ENCODE measurements at regions of chr3 and their contacts with region 1.

Region 1: GRCh38 chr3:15815696-15816095 is 17.9 kb upstream of the ANKRD28 start:
- DNase-seq: peak; percentile 84
- ATAC-seq: peak; percentile 59
- H3K4me3 ChIP-seq: no peak overlapping the region
- H3K27ac ChIP-seq: no peak overlapping the region
- H3K4me1 ChIP-seq: peaks cover 21% of the 10 kb centered on the region
- H3K27me3 ChIP-seq: no peaks in the 10 kb centered on the region
- CTCF ChIP-seq: peak; percentile 84

Region 2: GRCh38 chr3:15629860-15630597 is 185.7 kb before region 1 on chr3:
- CTCF ChIA-PET with region 1: interaction called, 6 read pairs
- POLR2A ChIA-PET with region 1: no interaction called
- intact Hi-C with region 1: loop called (anchors 1 kb)
- DNase-seq: peak; percentile 92
- ATAC-seq: peak; percentile 68
- H3K4me3 ChIP-seq: peak overlapping the region; percentile 55
- H3K27ac ChIP-seq: peak overlapping the region; percentile 89
- H3K4me1 ChIP-seq: peaks cover 50% of the 10 kb centered on the region
- H3K27me3 ChIP-seq: no peaks in the 10 kb centered on the region
- CTCF ChIP-seq: peak; percentile 95

Region 3: DNA sequence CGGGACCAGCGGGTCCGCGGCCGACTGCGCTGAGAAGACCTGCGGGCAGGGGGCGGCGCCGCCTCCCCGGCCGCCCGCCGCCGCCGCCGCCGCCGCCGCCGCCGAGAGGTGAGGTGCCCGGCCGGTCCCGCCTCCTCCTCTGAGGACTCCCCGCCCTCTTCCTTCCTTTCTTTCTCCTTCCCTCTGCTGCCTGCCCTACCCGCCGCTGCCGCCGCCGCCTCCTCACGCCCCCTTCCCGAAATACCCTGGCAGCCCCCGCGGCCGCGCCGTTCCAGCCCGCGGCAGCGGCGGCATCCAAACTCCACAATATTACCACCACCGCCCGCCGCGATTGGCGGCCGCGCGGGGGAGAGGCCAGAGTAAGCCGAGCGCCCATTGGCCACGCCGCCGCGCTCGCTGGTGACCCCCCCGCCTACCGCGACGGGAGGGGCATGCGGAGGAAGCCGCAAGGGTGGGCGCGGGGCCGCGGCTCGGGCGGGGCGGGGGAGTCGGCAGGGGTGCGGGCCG is 43.9 kb after region 1 on chr3:
- CTCF ChIA-PET with region 1: no interaction called
- POLR2A ChIA-PET with region 1: no interaction called
- intact Hi-C with region 1: loop called (anchors 1 kb)
- DNase-seq: peak; percentile 94
- ATAC-seq: peak; percentile 80
- H3K4me3 ChIP-seq: peak overlapping the region; percentile 80
- H3K27ac ChIP-seq: no peak overlapping the region
- H3K4me1 ChIP-seq: peaks cover 23% of the 10 kb centered on the region
- H3K27me3 ChIP-seq: no peaks in the 10 kb centered on the region
- CTCF ChIP-seq: no peak

Region 4: DNA sequence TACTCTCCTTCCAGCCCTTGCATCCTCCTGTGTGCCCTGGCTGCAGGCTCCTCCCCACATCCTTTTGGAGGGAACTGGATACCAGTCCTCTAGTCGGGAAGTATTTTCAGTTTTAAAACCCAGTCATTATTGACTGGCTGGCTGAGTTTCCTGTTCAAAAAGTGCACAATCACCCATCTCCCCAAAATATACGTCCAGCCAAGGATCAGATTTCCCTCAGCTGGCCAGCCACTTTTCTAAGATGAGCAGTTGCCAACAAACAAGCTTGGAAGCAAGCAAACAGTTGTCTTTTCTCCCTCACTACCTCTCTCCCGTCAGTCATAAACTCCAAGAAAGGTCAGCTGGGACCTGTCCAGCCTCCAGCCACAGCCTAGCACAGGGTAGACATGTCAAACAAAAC is 211.1 kb after region 1 on chr3:
- CTCF ChIA-PET with region 1: no interaction called
- POLR2A ChIA-PET with region 1: no interaction called
- intact Hi-C with region 1: loop called (anchors 1 kb)
- DNase-seq: no peak
- ATAC-seq: no peak
- H3K4me3 ChIP-seq: no peak overlapping the region
- H3K27ac ChIP-seq: no peak overlapping the region
- H3K4me1 ChIP-seq: no peaks in the 10 kb centered on the region
- H3K27me3 ChIP-seq: no peaks in the 10 kb centered on the region
- CTCF ChIP-seq: no peak

Region 5: DNA sequence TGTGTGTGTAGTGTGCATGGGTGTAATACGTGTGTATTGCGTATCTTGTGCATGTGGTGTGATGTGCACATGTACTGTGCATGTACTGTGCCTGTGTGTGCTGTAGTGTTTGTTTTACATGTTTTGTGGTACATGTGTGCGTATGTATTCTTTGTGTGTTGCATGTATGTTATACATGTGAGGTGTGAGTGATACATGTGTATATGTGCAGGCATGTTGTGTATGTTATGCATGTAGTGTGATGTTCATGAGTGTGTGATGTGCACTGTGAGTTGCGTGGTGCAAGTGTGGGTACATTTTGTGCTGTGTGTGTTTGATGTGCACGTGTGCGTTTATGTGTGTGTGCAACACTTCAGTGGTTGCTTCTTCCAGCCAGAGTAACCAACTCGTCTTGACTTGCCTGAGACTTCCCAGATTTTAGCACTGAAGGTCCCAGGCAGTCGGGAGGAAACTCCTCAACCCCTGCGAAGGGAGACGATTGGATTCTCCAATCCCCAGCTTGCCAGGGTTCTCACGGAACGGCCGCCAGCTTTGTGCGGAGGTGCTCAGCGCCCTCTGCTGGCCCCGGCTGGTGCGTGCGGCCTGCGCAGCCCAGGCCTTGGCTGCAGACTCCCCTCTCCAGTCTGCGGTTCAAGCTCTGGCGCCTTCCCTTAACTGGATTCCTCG is 362.4 kb after region 1 on chr3:
- CTCF ChIA-PET with region 1: interaction called, 8 read pairs
- POLR2A ChIA-PET with region 1: no interaction called
- intact Hi-C with region 1: loop called (anchors 1 kb)
- DNase-seq: peak; percentile 84
- ATAC-seq: peak; percentile 94
- H3K4me3 ChIP-seq: no peak overlapping the region
- H3K27ac ChIP-seq: no peak overlapping the region
- H3K4me1 ChIP-seq: peaks cover 12% of the 10 kb centered on the region; the same call in 1 of the 2 replicates
- H3K27me3 ChIP-seq: no peaks in the 10 kb centered on the region
- CTCF ChIP-seq: peak; percentile 96